CD8-positive, alpha-beta T cell (primary cell): ENCODE measurements at regions of chr5 and their contacts with region 1.

Region 1: GRCh38 chr5:113513384-113514288 is at the start of gene YTHDC2:
- DNase-seq: peak; percentile 77 to 94 (median 86)
- ATAC-seq: peak; percentile 95
- H3K4me3 ChIP-seq: peak within 1 kb of the TSS; percentile 64 to 78
- H3K4me3 Mint-ChIP-seq: peak within 1 kb of the TSS; percentile 90
- H3K27ac ChIP-seq: peak within 1 kb of the TSS; percentile 86 to 93
- H3K27ac Mint-ChIP-seq: peak within 1 kb of the TSS; percentile 95
- H3K4me1 ChIP-seq: peaks cover 19% of the 10 kb centered on the region
- H3K4me1 Mint-ChIP-seq: peaks cover 38% of the 10 kb centered on the region
- H3K27me3 ChIP-seq: no peaks in the 10 kb centered on the region
- H3K27me3 Mint-ChIP-seq: peaks cover 9% of the 10 kb centered on the region
- CTCF ChIP-seq: no peak
- total RNA-seq, gene YTHDC2: 35.4 to 36.1 TPM

Region 2: GRCh38 chr5:112160652-112161391 is 1352.8 kb before region 1 on chr5:
- CTCF ChIA-PET with region 1: no interaction called
- POLR2A ChIA-PET with region 1: no interaction called
- intact Hi-C with region 1: loop called (anchors 10 kb)
- DNase-seq: peak; percentile 85 to 96 (median 92)
- ATAC-seq: peak; percentile 99
- H3K4me3 ChIP-seq: peak overlapping the region; percentile 74 to 82
- H3K4me3 Mint-ChIP-seq: peak overlapping the region; percentile 95
- H3K27ac ChIP-seq: peak overlapping the region; percentile 58 to 70
- H3K27ac Mint-ChIP-seq: peak overlapping the region; percentile 93
- H3K4me1 ChIP-seq: peaks cover 20% of the 10 kb centered on the region
- H3K4me1 Mint-ChIP-seq: peaks cover 40% of the 10 kb centered on the region
- H3K27me3 ChIP-seq: no peaks in the 10 kb centered on the region
- H3K27me3 Mint-ChIP-seq: no peaks in the 10 kb centered on the region
- CTCF ChIP-seq: peak; percentile 85

Region 3: GRCh38 chr5:112976432-112977309 is 537.0 kb before region 1 on chr5 and contains the start of gene DCP2:
- CTCF ChIA-PET with region 1: no interaction called
- POLR2A ChIA-PET with region 1: interaction called, 3 read pairs
- intact Hi-C with region 1: loop called (anchors 1 to 5 kb)
- DNase-seq: peak; percentile 88 to 99 (median 95)
- ATAC-seq: peak; percentile 96
- H3K4me3 ChIP-seq: peak within 1 kb of the TSS; percentile 57 to 98
- H3K4me3 Mint-ChIP-seq: peak within 1 kb of the TSS; percentile 100
- H3K27ac ChIP-seq: peak within 1 kb of the TSS; percentile 81
- H3K27ac Mint-ChIP-seq: peak within 1 kb of the TSS; percentile 97
- H3K4me1 ChIP-seq: peaks cover 24% of the 10 kb centered on the region
- H3K4me1 Mint-ChIP-seq: peaks cover 43% of the 10 kb centered on the region
- H3K27me3 ChIP-seq: no peaks in the 10 kb centered on the region
- H3K27me3 Mint-ChIP-seq: no peaks in the 10 kb centered on the region
- CTCF ChIP-seq: no peak
- total RNA-seq, gene DCP2: 65.4 to 69.8 TPM

Region 4: DNA sequence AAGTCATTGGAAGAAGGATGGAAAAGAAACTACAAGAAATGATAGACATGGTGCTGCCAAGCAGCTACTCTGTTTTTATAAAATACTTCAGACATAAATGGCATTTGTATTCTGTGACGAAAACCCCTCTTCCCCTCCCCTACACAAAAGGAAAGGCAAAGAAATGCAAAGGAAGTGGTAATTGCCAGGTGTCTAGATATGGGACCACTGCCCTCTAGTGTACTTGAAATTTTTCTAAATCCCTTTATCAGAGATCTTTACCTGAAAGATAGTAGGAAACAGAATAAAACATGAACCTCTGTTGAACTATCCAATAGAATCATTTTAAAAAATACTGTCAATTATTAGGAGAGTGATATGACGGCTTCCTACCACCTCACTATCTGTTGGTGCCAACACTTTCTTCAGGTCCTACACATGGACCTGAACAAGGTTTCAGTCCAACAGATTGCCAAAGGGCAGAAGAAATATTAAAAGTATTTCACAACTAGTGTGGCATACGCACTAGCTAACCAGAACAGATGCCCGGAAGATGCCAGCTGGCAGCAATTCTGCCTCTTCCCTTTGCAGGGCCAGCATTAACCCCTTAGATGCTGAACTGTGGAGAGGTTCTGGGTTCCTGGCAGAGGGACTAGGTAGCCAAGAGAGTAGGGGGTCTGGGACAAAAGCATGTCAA is 183.0 kb before region 1 on chr5:
- CTCF ChIA-PET with region 1: no interaction called
- POLR2A ChIA-PET with region 1: no interaction called
- intact Hi-C with region 1: loop called (anchors 1 to 2 kb)
- DNase-seq: peak in 3 of 9 experiments; percentile 9 to 81 (median 66)
- ATAC-seq: peak; percentile 83
- H3K4me3 ChIP-seq: no peak overlapping the region
- H3K4me3 Mint-ChIP-seq: peak overlapping the region; percentile 35
- H3K27ac ChIP-seq: no peak overlapping the region
- H3K27ac Mint-ChIP-seq: peak overlapping the region; percentile 12
- H3K4me1 ChIP-seq: peaks cover 7% of the 10 kb centered on the region
- H3K4me1 Mint-ChIP-seq: peaks cover 19% of the 10 kb centered on the region
- H3K27me3 ChIP-seq: no peaks in the 10 kb centered on the region
- H3K27me3 Mint-ChIP-seq: peaks cover 2% of the 10 kb centered on the region
- CTCF ChIP-seq: peak; percentile 58

Region 5: DNA sequence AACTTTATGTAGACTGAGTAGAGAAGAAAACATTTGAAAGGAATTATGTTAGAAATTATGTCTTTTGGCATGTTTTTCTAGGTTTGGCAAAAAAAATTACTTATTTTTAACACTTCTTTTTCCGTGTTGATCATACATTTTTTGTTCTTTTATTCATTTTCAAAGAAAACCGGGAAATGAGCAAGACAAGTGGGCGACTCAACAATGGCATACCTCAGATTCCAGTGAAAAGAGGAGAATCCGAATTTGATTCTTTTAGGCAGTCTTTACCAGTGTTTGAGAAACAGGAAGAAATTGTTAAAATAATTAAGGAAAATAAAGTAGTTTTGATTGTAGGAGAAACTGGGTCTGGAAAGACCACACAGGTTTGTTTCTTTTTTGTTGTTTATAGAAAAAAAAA is 12.8 kb after region 1 on chr5:
- CTCF ChIA-PET with region 1: interaction called, 6 read pairs
- POLR2A ChIA-PET with region 1: interaction called, 6 read pairs
- intact Hi-C with region 1: loop called in 1 of 2 experiments (anchors 1 kb)
- DNase-seq: no peak
- ATAC-seq: no peak
- H3K4me3 ChIP-seq: no peak overlapping the region
- H3K4me3 Mint-ChIP-seq: no peak overlapping the region
- H3K27ac ChIP-seq: no peak overlapping the region
- H3K27ac Mint-ChIP-seq: no peak overlapping the region
- H3K4me1 ChIP-seq: peaks cover 23% of the 10 kb centered on the region
- H3K4me1 Mint-ChIP-seq: peaks cover 41% of the 10 kb centered on the region
- H3K27me3 ChIP-seq: no peaks in the 10 kb centered on the region
- H3K27me3 Mint-ChIP-seq: no peaks in the 10 kb centered on the region
- CTCF ChIP-seq: no peak

Region 6: GRCh38 chr5:113735751-113736150 is 222.1 kb after region 1 on chr5:
- CTCF ChIA-PET with region 1: no interaction called
- POLR2A ChIA-PET with region 1: no interaction called
- intact Hi-C with region 1: no loop called
- DNase-seq: no peak
- ATAC-seq: no peak
- H3K4me3 ChIP-seq: no peak overlapping the region
- H3K4me3 Mint-ChIP-seq: no peak overlapping the region
- H3K27ac ChIP-seq: no peak overlapping the region
- H3K27ac Mint-ChIP-seq: no peak overlapping the region
- H3K4me1 ChIP-seq: no peaks in the 10 kb centered on the region
- H3K4me1 Mint-ChIP-seq: no peaks in the 10 kb centered on the region
- H3K27me3 ChIP-seq: no peaks in the 10 kb centered on the region
- H3K27me3 Mint-ChIP-seq: no peaks in the 10 kb centered on the region
- CTCF ChIP-seq: no peak

Region 7: DNA sequence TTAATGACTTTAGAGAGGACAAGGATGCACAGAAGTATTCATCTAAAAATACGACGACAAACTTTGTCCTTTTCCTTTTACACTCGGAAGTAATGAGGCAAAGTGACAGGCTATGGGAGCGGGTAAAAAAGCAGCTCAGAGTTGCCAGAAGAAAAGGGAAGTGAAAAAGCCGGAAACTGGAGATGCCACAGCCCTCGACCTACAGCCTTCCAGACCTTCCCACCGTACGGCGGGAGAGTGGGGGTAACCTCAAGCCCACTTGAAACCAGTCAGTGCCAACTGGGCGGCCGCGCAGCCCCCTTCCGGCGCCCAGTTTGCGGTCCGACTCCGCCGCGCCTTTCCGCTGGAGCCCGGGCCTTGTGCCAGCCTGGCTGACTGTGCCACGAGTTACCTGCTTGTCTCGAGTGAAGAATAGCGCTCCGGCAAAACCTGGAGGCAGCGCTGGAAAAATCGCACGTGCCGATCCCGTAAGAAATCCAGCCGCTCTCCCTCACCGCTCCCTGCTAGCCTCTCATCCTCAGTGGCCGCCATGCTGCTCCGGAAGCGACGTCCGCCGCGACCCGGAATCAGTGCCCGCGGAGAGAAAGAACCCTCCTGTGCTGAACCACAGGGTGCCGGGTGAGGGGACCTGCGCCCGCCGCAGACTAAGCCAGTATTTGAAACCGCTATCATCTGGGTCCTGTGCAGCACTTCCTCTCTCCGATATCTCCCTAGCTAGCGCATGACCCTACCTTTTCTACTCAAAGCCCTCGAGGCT is 1748.9 kb after region 1 on chr5 and contains the start of gene PGGT1B:
- CTCF ChIA-PET with region 1: no interaction called
- POLR2A ChIA-PET with region 1: no interaction called
- intact Hi-C with region 1: loop called in 1 of 2 experiments (anchors 10 kb)
- DNase-seq: peak; percentile 37 to 83 (median 72)
- ATAC-seq: peak; percentile 94
- H3K4me3 ChIP-seq: peak within 1 kb of the TSS; percentile 82 to 97
- H3K4me3 Mint-ChIP-seq: peak within 1 kb of the TSS; percentile 94
- H3K27ac ChIP-seq: peak within 1 kb of the TSS; percentile 62 to 91
- H3K27ac Mint-ChIP-seq: peak within 1 kb of the TSS; percentile 98
- H3K4me1 ChIP-seq: peaks cover 28% of the 10 kb centered on the region
- H3K4me1 Mint-ChIP-seq: peaks cover 49% of the 10 kb centered on the region
- H3K27me3 ChIP-seq: no peaks in the 10 kb centered on the region
- H3K27me3 Mint-ChIP-seq: no peaks in the 10 kb centered on the region
- CTCF ChIP-seq: no peak
- total RNA-seq, gene PGGT1B: 55.2 to 57.0 TPM